Colonic mucosa (tissue), 4 donors: ENCODE measurements at regions of chr17 and their contacts with region 1.

Region 1: GRCh38 chr17:49779739-49780231 is 8.7 kb upstream of the KAT7 start:
- DNase-seq: peak; percentile 29
- H3K4me3 ChIP-seq: no peak overlapping the region
- H3K27ac ChIP-seq: peak overlapping the region; percentile 11
- H3K4me1 ChIP-seq: no peaks in the 10 kb centered on the region
- H3K27me3 ChIP-seq: no peaks in the 10 kb centered on the region
- CTCF ChIP-seq: peak; percentile 28

Region 2: GRCh38 chr17:49707608-49708514 is 71.9 kb before region 1 on chr17 and contains the start of gene SLC35B1:
- intact Hi-C with region 1: loop called (anchors 5 kb)
- DNase-seq: peak; percentile 100
- H3K4me3 ChIP-seq: peak within 1 kb of the TSS; percentile 97
- H3K27ac ChIP-seq: peak within 1 kb of the TSS; percentile 87
- H3K4me1 ChIP-seq: peaks cover 10% of the 10 kb centered on the region
- H3K27me3 ChIP-seq: no peaks in the 10 kb centered on the region
- CTCF ChIP-seq: peak; percentile 76
- total RNA-seq, gene SLC35B1: 43.0 to 73.5 TPM